A549 (cell line): ENCODE measurements at regions of chr12 and their contacts with region 1.

Region 1: GRCh38 chr12:111451649-111452129 is 46.0 kb downstream of the SH2B3 start:
- DNase-seq: peak; percentile 29 to 56
- ATAC-seq: peak in 1 of 2 experiments; percentile 34; a peak in 3 of 6 replicates
- H3K4me3 ChIP-seq: no peak overlapping the region
- H3K27ac ChIP-seq: no peak overlapping the region
- H3K4me1 ChIP-seq: no peaks in the 10 kb centered on the region
- CTCF ChIP-seq: peak; percentile 88
- EP300 ChIP-seq: no peak
- POLR2A ChIP-seq: no peak
- RAD21 ChIP-seq: peak; percentile 73

Region 2: GRCh38 chr12:111386885-111387284 is 64.8 kb before region 1 on chr12:
- CTCF ChIA-PET with region 1: interaction called, 240 read pairs
- POLR2A ChIA-PET with region 1: no interaction called
- DNase-seq: no peak
- ATAC-seq: no peak
- H3K4me3 ChIP-seq: no peak overlapping the region
- H3K27ac ChIP-seq: no peak overlapping the region
- H3K4me1 ChIP-seq: no peaks in the 10 kb centered on the region
- CTCF ChIP-seq: no peak
- EP300 ChIP-seq: no peak
- POLR2A ChIP-seq: no peak
- RAD21 ChIP-seq: no peak

Region 3: GRCh38 chr12:111412007-111412829 is 39.5 kb before region 1 on chr12:
- CTCF ChIA-PET with region 1: interaction called, 36 read pairs
- POLR2A ChIA-PET with region 1: no interaction called
- DNase-seq: no peak
- ATAC-seq: peak in 1 of 2 experiments; percentile 6; a peak in 1 of 6 replicates
- H3K4me3 ChIP-seq: no peak overlapping the region
- H3K27ac ChIP-seq: 0 out of 6 replicates have a peak overlapping the region, but pooled peaks of 1 of the 2 experiments have one; percentile 9
- H3K4me1 ChIP-seq: peaks cover 28% of the 10 kb centered on the region
- CTCF ChIP-seq: no peak
- EP300 ChIP-seq: no peak
- POLR2A ChIP-seq: no peak
- RAD21 ChIP-seq: no peak

Region 4: GRCh38 chr12:111469401-111469800 is 17.7 kb after region 1 on chr12:
- CTCF ChIA-PET with region 1: interaction called, 54 read pairs
- POLR2A ChIA-PET with region 1: no interaction called
- DNase-seq: no peak
- ATAC-seq: no peak
- H3K4me3 ChIP-seq: no peak overlapping the region
- H3K27ac ChIP-seq: no peak overlapping the region
- H3K4me1 ChIP-seq: peaks cover 16% of the 10 kb centered on the region; the same call in 1 of the 3 replicates
- CTCF ChIP-seq: no peak
- EP300 ChIP-seq: no peak
- POLR2A ChIP-seq: no peak
- RAD21 ChIP-seq: no peak

Region 5: DNA sequence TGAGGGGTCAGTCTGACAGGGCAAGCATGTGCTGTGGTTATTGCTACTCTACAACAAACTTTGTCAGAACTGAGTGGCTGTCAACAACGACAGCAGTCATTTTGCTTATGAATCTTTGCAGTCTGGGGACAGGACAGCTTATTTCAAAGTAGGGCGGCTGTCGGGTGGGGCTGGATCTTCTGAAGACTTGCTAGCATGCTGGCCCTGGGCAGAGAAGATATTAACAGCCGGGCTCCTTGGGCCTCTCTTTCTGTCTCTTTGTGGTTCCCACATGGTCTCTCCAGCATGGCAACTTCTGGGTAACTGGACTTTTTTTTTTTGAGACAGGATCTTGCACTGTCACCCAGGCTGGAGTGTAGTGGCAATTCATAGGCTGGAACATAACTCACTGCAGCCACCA is 281.1 kb after region 1 on chr12:
- CTCF ChIA-PET with region 1: no interaction called
- POLR2A ChIA-PET with region 1: no interaction called
- DNase-seq: no peak
- ATAC-seq: no peak
- H3K4me3 ChIP-seq: no peak overlapping the region
- H3K27ac ChIP-seq: no peak overlapping the region
- H3K4me1 ChIP-seq: no peaks in the 10 kb centered on the region
- CTCF ChIP-seq: no peak
- EP300 ChIP-seq: no peak
- POLR2A ChIP-seq: no peak
- RAD21 ChIP-seq: no peak